SK-N-SH (cell line): ENCODE measurements at regions of chr3 and their contacts with region 1.

Region 1: DNA sequence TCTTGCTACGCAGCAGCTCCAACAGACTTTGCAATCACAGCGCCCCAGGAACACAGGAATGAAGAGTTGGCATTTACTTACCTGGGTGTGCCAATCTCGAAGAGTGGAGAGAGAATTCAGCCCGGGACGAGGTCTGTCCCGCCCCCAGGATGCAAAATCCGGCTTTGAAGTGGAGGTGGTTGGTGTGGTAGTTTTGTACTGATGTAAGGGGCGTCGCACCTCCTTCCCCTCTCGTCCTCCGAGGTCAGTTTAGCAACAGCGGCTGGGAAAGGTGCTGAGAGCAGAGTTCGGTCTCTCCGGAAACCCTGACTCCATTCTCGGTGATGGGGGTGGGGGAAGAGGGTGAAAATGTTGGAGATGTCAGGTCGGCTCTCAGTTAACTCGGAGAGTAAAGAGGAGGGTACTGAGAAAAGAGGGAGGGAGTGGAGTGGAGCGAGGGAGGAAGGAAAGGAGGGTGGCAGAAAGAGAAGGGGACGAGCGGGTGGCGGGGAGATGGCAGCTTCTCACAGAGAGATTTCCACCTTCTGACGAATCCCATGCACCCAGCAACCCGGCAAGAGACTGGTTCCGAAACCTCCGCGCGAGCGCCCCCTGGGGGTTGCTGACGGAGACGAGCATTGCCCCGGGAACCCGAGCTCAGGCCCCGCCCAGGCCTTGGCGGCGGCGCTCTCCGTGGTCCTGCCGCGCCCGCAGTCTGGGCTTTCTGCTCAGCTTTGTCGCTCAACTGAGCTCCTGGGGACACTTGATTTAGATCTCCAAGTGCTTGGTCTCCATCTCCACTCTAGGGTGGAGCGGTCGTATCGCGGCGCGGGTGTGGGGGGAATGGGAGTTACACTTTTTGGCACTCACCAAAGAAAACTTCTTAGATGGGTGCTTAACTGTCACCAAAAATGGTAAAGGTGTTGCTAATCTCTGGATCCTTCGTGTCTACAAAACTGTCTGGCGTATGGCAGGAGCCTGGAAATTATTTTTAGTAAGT is at the start of gene CPNE4:
- DNase-seq: peak; percentile 93
- H3K4me3 ChIP-seq: peak within 1 kb of the TSS; percentile 45 to 64
- H3K27ac ChIP-seq: no peak within 1 kb of the TSS
- H3K4me1 ChIP-seq: peaks cover 0 to 8% of the 10 kb centered on the region in 2 experiments; a peak in 1 of 4 replicates
- H3K27me3 ChIP-seq: no peaks in the 10 kb centered on the region; the same call in 1 of the 2 replicates
- CTCF ChIP-seq: peak; percentile 82
- EP300 ChIP-seq: no peak
- RAD21 ChIP-seq: peak; percentile 69
- polyA plus RNA-seq, gene CPNE4: not detected in 2 replicates

Region 2: DNA sequence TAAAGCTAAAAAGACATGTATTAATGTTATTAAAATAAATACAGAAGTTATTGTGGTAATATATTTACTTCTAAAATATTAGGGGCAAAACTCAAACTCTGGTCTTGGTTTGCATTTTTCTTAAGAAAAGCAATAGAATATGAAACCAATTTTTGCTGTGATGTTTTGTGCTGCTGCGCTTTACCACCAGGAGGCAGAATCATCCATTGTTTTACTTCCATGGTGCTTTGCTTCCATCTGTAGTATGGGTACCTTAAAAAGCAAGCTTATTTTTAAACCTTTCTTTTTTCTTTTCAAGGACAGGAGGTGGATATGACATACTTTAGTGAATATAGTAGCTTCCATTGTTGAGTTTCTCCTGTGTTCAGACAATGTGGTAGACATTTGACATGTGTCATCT is 485.4 kb before region 1 on chr3:
- CTCF ChIA-PET with region 1: interaction called, 10 read pairs
- POLR2A ChIA-PET with region 1: no interaction called
- DNase-seq: no peak
- H3K4me3 ChIP-seq: no peak overlapping the region
- H3K27ac ChIP-seq: no peak overlapping the region
- H3K4me1 ChIP-seq: peaks cover 0 to 8% of the 10 kb centered on the region in 2 experiments; a peak in 2 of 4 replicates
- H3K27me3 ChIP-seq: no peaks in the 10 kb centered on the region
- CTCF ChIP-seq: peak; percentile 57
- EP300 ChIP-seq: no peak
- RAD21 ChIP-seq: peak; percentile 55

Region 3: DNA sequence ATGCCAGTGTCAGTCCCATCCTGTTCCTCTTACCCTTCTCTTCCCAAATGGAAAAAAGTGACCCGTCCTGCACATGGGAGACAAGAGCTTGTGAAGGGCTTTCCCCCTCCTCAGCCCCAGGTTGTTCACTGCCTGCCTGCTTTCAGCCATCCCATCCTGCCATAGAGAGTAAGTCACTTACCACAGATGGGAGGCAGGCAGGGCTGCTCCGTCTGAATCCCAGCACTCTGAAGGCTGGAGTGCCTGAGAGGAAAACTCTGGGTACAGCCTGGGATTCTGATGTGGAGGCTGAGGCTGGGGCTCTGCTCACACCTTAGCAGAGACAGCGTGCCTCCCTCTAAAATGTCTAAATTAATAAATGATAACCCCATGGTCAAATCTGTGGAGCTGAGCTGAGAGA is 14.7 kb before region 1 on chr3:
- CTCF ChIA-PET with region 1: interaction called, 11 read pairs
- POLR2A ChIA-PET with region 1: no interaction called
- DNase-seq: no peak
- H3K4me3 ChIP-seq: no peak overlapping the region
- H3K27ac ChIP-seq: no peak overlapping the region
- H3K4me1 ChIP-seq: no peaks in the 10 kb centered on the region
- H3K27me3 ChIP-seq: no peaks in the 10 kb centered on the region
- CTCF ChIP-seq: no peak
- EP300 ChIP-seq: no peak
- RAD21 ChIP-seq: no peak

Region 4: DNA sequence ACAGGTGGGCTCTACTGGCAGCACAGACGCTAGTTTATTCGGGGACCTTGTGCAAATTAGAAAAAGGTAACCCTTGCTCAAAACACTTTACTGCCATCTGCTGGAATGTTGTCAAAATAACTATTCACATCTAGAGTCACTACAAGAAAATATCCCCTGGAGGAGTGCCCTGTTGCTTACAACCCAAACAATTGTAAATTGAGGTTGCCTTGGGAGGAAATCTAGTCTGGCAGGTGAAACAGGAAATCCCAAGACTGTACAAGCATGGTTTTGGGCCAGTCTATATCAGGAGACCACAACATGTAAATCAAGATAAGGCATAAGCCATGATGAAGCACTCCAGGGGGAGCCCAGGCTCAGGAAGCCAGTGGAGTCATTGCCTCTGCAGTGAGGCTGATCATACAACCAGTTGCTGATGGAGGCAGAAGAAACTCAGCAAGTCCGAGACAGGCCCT is 145.6 kb after region 1 on chr3:
- CTCF ChIA-PET with region 1: interaction called, 102 read pairs
- POLR2A ChIA-PET with region 1: no interaction called
- DNase-seq: peak; percentile 42
- H3K4me3 ChIP-seq: no peak overlapping the region
- H3K27ac ChIP-seq: no peak overlapping the region
- H3K4me1 ChIP-seq: no peaks in the 10 kb centered on the region
- H3K27me3 ChIP-seq: no peaks in the 10 kb centered on the region
- CTCF ChIP-seq: peak; percentile 74
- EP300 ChIP-seq: no peak
- RAD21 ChIP-seq: peak; percentile 82

Region 5: GRCh38 chr3:132210476-132211346 is 175.9 kb after region 1 on chr3:
- CTCF ChIA-PET with region 1: interaction called, 38 read pairs
- POLR2A ChIA-PET with region 1: interaction called, 4 read pairs
- DNase-seq: peak; percentile 8
- H3K4me3 ChIP-seq: no peak overlapping the region
- H3K27ac ChIP-seq: no peak overlapping the region
- H3K4me1 ChIP-seq: no peaks in the 10 kb centered on the region
- H3K27me3 ChIP-seq: no peaks in the 10 kb centered on the region
- CTCF ChIP-seq: peak; percentile 53
- EP300 ChIP-seq: no peak
- RAD21 ChIP-seq: peak; percentile 55

Region 6: DNA sequence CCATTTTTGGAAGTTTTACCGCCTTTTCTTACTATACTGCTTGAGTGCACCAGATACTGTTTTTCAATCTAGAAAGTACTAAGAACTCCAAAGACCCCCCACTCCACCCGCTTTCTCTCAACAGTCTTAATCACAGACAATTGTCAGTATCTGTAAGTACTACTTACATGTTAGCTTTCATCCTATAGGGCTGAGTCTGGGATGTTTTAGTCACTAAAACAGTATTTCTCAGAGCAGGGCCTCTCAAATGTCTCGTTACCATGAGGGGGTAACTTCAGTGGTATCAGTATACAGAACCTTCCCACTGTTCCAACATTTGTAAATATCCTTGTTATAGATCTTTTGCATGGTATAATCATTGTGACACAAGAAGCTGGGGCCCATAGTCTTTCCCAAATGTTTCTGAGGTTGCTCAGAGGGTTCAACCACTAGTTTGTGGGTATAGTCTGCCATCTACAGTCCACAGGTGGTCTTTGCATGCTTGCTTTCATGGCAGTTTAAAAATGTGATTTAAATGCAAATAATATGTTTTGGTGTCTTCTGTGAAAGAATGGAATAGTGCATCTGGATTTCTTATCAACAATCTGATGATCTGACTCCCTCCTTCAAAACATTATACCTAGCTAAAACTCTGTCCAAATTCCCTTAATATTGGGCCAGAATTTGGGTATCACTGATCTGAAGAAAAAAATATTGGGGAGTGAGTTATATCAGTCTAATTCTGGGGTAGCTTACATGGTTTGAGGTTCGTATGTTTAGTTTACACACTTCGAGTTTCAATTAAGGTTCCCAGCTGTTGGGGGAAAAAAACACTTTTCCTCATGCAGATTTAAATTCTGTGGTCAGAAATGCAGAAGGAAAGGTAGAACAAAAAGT is 364.5 kb after region 1 on chr3:
- CTCF ChIA-PET with region 1: interaction called, 15 read pairs
- POLR2A ChIA-PET with region 1: no interaction called
- DNase-seq: peak; percentile 76
- H3K4me3 ChIP-seq: peak overlapping the region in 1 of 2 experiments; percentile 14; a peak in 1 of 4 replicates
- H3K27ac ChIP-seq: no peak overlapping the region; a peak in 1 of 4 replicates
- H3K4me1 ChIP-seq: peaks cover 0 to 15% of the 10 kb centered on the region in 2 experiments; a peak in 2 of 4 replicates
- H3K27me3 ChIP-seq: no peaks in the 10 kb centered on the region
- CTCF ChIP-seq: peak; percentile 95
- EP300 ChIP-seq: no peak
- RAD21 ChIP-seq: peak; percentile 97